Activated B cell treated with CpG ODN at 0.5 μM for 24 hours (primary cell): ENCODE measurements at regions of chr1 and their contacts with region 1.

Region 1: GRCh38 chr1:48572646-48573261 is 100.8 kb upstream of the SPATA6 start:
- DNase-seq: no peak
- ATAC-seq: no peak
- H3K4me3 Mint-ChIP-seq: no peak overlapping the region
- H3K27ac Mint-ChIP-seq: no peak overlapping the region
- H3K4me1 Mint-ChIP-seq: no peaks in the 10 kb centered on the region
- H3K27me3 Mint-ChIP-seq: peaks cover 1% of the 10 kb centered on the region
- CTCF ChIP-seq: no peak

Region 2: GRCh38 chr1:48309564-48310082 is 263.1 kb before region 1 on chr1:
- CTCF ChIA-PET with region 1: no interaction called
- POLR2A ChIA-PET with region 1: no interaction called
- intact Hi-C with region 1: no loop called
- DNase-seq: no peak
- ATAC-seq: no peak
- H3K4me3 Mint-ChIP-seq: no peak overlapping the region
- H3K27ac Mint-ChIP-seq: no peak overlapping the region
- H3K4me1 Mint-ChIP-seq: no peaks in the 10 kb centered on the region
- H3K27me3 Mint-ChIP-seq: peaks cover 5% of the 10 kb centered on the region
- CTCF ChIP-seq: no peak

Region 3: DNA sequence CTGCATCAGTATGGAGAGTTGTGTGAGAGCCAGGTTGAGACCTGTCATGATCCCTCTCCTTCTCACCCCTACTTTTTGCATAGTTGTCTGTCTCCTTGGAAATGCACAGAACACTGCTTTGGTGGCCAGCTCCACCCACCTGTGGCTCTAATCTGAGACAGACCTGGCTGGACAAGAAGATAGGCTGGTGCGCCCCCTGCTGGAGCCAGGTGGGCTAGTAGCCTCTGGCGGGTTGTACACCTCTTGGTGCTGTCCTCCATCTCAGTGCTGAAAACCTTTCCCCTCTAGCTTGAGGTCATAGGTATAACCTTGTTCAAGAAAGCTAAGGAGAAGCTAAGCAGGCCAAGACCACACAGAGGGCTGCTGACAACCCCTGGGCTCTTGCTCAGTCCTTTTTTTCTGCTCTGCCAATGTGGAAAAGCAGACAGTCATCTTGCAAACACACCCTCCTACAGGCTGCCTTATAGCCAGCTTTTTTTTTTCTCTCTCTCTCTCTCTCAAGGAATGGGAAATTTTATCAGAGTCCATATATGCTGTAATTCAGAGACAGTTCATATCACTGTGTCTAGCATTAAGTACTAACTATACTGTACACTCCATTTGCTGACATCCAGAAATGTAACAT is 41.9 kb before region 1 on chr1:
- CTCF ChIA-PET with region 1: no interaction called
- POLR2A ChIA-PET with region 1: no interaction called
- intact Hi-C with region 1: no loop called
- DNase-seq: no peak
- ATAC-seq: no peak
- H3K4me3 Mint-ChIP-seq: no peak overlapping the region
- H3K27ac Mint-ChIP-seq: no peak overlapping the region
- H3K4me1 Mint-ChIP-seq: no peaks in the 10 kb centered on the region
- H3K27me3 Mint-ChIP-seq: peaks cover 11% of the 10 kb centered on the region
- CTCF ChIP-seq: no peak

Region 4: DNA sequence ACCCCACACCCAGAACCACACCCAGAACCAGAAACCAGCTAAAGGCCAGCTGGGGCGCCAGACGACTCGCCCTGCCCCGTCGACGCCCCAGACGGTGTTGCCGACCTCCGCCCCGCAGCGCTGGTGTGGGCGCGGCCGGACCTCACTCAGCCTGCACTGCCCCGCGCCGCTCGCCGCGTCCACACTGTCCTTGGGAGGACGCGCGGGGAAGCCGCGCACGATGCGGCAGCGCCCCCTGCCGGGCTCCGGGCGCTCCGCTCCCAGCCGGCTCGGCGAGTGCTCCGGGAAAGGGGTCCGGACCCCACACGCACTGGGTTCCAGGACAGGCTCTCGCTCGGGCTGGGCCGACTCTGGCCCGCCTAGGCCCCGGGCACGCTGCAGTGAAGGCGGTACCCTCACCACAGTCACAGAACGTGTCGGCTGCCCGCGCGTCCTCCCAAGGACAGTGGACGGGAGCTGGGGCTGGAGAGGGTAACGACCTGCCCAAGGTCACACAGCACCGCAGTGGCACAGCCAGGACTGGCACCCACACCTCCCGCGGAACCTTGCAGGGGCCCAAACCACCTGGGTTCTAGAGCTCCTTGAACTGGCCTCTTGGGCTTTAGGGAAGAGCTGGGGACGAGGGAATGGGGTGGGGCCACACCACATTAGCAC is 1760.3 kb after region 1 on chr1:
- CTCF ChIA-PET with region 1: no interaction called
- POLR2A ChIA-PET with region 1: no interaction called
- intact Hi-C with region 1: loop called (anchors 5 kb)
- DNase-seq: peak; percentile 25
- ATAC-seq: no peak
- H3K4me3 Mint-ChIP-seq: peak overlapping the region; percentile 37
- H3K27ac Mint-ChIP-seq: no peak overlapping the region
- H3K4me1 Mint-ChIP-seq: peaks cover 3% of the 10 kb centered on the region
- H3K27me3 Mint-ChIP-seq: peaks cover 30% of the 10 kb centered on the region
- CTCF ChIP-seq: no peak

Region 5: GRCh38 chr1:50348449-50349241 is 1775.9 kb after region 1 on chr1:
- CTCF ChIA-PET with region 1: no interaction called
- POLR2A ChIA-PET with region 1: no interaction called
- intact Hi-C with region 1: loop called (anchors 1 kb)
- DNase-seq: no peak
- ATAC-seq: peak; percentile 34
- H3K4me3 Mint-ChIP-seq: no peak overlapping the region
- H3K27ac Mint-ChIP-seq: no peak overlapping the region
- H3K4me1 Mint-ChIP-seq: no peaks in the 10 kb centered on the region
- H3K27me3 Mint-ChIP-seq: peaks cover 15% of the 10 kb centered on the region
- CTCF ChIP-seq: peak; percentile 36